Activated CD8-positive, alpha-beta T cell treated with anti-CD3 and anti-CD28 coated beads, Interleukin-2, amount 10 ng/mL, durations not matched to agents 7 days and 5 days (primary cell): ENCODE measurements at regions of chr4 and their contacts with region 1.

Region 1: DNA sequence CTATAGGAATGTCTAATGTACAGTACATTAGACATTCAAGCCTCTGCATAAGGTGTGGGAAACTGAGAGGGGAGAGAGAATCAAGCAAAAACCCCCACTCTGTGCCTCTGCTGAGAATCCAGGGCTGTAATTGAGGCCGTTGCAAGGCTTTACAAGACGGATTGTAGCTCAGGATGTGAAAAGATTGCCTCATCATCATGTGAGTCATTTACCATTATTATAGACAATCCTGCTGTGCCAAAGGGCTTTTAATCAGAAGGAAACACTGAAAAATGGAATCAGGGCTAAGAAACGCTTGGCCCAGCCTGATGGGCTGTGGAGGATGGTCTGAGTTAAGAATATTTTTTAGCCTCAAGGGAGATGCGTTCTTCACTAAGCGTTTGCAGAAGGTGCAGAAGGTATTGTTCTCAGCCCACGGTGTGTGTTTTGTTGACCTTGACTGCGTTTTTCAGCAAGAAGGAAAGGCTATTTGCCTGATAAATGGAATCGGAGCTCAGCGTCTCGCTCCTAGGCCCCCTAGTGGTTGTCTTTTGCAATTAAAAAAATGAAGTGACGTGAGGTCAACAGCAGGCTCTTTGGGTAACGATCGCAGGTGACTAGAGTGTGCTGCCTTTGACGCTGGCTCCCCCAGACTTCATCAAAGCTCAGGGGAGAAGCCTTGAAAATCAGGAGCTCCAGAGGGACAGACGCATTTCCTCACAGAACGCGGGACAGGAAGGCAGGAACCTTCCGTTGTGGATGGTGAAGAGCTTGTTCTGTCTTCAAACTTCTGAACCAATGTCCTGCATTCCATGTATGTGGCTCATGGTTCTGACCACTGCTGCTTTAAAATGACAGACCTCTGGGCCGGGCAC is 18.1 kb upstream of the CHRNA9 start:
- DNase-seq: peak; percentile 81
- ATAC-seq: peak; percentile 67
- H3K4me3 Mint-ChIP-seq: peak overlapping the region; percentile 80
- H3K27ac Mint-ChIP-seq: peak overlapping the region; percentile 94
- H3K4me1 Mint-ChIP-seq: peaks cover 56% of the 10 kb centered on the region
- H3K27me3 Mint-ChIP-seq: no peaks in the 10 kb centered on the region

Region 2: DNA sequence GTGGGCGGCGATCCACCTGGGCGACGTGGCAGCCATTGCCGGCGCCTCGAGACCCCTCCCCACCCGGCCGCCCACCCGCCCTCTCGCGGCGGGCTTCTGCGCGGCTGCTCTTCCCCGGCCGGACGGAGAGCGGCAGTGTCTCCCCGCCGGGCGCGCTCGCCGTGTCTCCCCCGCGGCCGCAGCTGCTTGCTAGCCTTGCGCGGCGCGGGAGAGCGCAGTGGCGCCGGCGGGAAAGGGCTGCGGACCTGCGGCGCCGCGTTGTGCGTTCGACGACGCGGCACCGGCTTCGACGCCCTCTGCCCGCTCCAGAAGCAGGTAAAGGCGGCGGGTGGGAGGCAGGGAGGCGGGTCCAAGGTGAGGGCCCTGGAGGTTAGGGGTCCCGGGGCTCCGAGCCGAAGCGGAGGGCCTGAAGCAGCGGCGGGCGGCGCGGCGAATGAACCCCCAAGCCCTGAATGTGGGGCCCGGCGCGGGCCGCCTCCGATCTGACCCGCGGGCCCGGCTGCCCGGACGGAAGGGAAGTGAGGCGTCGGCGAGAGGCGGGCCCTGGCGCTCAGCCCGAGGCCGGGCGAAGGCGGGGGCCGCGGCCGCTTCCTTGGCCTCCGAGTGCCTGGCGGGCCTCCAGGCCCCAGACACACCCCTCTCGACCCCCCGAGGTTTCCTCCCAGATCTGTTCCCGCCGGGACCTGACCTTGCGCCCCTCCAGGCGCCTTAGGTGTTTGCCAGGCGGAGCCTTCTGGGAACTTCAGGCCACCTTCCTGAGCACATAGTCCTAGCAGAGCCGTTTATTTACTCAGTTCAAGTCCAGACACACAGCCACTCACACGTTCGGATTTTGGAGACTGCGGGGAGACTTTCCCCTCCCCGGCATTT is 260.1 kb before region 1 on chr4 and contains the start of gene N4BP2:
- CTCF ChIA-PET with region 1: interaction called, 26 read pairs
- POLR2A ChIA-PET with region 1: interaction called, 11 read pairs
- DNase-seq: peak; percentile 80
- ATAC-seq: peak; percentile 49
- H3K4me3 Mint-ChIP-seq: peak within 1 kb of the TSS; percentile 93
- H3K27ac Mint-ChIP-seq: peak within 1 kb of the TSS; percentile 96
- H3K4me1 Mint-ChIP-seq: peaks cover 37% of the 10 kb centered on the region
- H3K27me3 Mint-ChIP-seq: peaks cover 8% of the 10 kb centered on the region
- total RNA-seq, gene N4BP2: 25.1 to 29.0 TPM

Region 3: DNA sequence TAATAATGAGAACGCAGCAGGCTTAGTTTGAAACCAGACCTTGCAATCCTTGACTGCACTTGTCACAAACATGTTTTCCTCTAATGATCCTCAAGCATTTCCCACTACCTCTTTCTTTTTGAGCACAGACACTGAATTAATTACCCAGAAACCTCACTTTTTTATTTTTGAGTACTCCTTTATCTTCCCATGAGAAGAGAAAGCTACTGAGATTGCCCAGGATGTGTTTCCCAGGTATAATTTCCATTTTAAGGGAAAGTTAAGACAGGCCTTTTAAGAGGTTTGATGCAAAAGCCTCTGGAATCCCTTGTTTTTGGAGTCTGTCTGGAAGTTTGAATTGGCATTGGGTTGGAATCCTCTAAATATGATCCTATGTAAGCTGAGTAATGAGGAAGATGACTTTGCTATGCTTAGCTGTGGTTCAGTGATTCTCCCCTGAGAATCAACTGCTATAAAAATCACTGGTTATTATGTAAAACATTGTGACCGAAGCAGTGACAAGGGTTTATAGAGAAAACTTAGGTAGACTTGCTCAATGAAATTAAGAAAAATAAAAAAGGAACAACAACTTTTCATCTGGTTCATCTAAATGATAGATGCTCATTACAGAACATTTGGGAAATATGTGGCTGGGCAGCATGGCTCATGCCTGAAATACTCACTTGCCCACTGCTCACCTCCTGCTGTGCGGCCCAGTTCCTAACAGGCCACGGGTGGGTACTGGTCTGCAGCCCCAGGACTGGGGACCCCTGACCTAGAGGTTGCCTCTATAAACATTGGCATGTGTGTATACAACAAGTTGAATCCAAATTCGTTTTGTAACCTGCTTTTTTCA is 131.0 kb before region 1 on chr4:
- CTCF ChIA-PET with region 1: interaction called, 149 read pairs
- POLR2A ChIA-PET with region 1: no interaction called
- DNase-seq: no peak
- ATAC-seq: no peak
- H3K4me3 Mint-ChIP-seq: no peak overlapping the region
- H3K27ac Mint-ChIP-seq: no peak overlapping the region
- H3K4me1 Mint-ChIP-seq: peaks cover 63% of the 10 kb centered on the region
- H3K27me3 Mint-ChIP-seq: no peaks in the 10 kb centered on the region

Region 4: GRCh38 chr4:40199999-40200874 is 116.8 kb before region 1 on chr4:
- CTCF ChIA-PET with region 1: interaction called, 149 read pairs
- POLR2A ChIA-PET with region 1: interaction called, 155 read pairs
- DNase-seq: peak; percentile 90
- ATAC-seq: peak; percentile 45
- H3K4me3 Mint-ChIP-seq: peak overlapping the region; percentile 93
- H3K27ac Mint-ChIP-seq: peak overlapping the region; percentile 96
- H3K4me1 Mint-ChIP-seq: peaks cover 37% of the 10 kb centered on the region
- H3K27me3 Mint-ChIP-seq: no peaks in the 10 kb centered on the region

Region 5: GRCh38 chr4:40212674-40213527 is 104.1 kb before region 1 on chr4:
- CTCF ChIA-PET with region 1: interaction called, 70 read pairs
- POLR2A ChIA-PET with region 1: interaction called, 5 read pairs
- DNase-seq: peak; percentile 33
- ATAC-seq: peak; percentile 25
- H3K4me3 Mint-ChIP-seq: peak overlapping the region; percentile 68
- H3K27ac Mint-ChIP-seq: peak overlapping the region; percentile 86
- H3K4me1 Mint-ChIP-seq: peaks cover 90% of the 10 kb centered on the region
- H3K27me3 Mint-ChIP-seq: no peaks in the 10 kb centered on the region

Region 6: DNA sequence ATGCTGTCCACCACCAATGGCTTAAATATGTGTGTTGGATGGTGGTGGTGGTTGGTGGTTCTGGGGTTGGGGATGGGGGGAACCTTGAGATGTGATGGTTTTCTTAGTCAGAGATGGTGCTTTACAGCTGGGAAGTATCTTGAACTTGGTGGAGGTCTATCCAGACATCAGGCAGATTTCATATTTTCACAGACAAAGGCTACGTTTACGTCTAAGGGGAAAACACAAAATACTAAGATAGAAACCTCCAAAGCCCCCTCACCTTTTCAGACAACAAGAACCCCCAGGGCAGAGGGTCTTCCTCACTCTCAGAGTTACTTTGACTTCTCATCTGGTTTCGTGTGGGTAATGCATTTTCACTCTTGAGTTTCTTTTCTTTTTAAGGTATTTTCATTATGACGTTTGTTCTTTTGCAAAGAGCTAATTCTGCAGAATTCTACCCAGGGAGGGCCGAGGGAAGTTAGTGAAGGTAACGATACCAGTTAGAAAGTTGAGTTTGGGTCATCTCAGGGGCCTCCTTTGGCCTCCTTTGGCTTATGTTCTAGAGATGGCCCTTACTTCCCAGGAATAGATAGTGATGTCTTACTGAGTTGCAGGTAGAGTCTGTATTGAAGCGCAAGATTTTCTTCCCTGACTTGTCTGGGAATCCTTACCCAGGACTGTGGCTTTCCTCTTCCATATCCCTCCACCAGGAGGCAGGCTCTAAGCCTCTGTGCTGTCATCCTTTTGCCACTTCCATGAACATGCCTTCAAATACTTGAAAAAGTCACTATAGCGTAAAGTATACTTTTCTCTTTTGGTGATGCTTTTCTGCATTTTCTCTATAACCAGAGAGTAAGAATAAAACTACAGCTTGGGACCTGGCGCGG is 88.3 kb before region 1 on chr4:
- CTCF ChIA-PET with region 1: interaction called, 145 read pairs
- POLR2A ChIA-PET with region 1: interaction called, 5 read pairs
- DNase-seq: peak; percentile 56
- ATAC-seq: no peak
- H3K4me3 Mint-ChIP-seq: peak overlapping the region; percentile 64
- H3K27ac Mint-ChIP-seq: peak overlapping the region; percentile 84
- H3K4me1 Mint-ChIP-seq: peaks cover 95% of the 10 kb centered on the region
- H3K27me3 Mint-ChIP-seq: no peaks in the 10 kb centered on the region

Region 7: DNA sequence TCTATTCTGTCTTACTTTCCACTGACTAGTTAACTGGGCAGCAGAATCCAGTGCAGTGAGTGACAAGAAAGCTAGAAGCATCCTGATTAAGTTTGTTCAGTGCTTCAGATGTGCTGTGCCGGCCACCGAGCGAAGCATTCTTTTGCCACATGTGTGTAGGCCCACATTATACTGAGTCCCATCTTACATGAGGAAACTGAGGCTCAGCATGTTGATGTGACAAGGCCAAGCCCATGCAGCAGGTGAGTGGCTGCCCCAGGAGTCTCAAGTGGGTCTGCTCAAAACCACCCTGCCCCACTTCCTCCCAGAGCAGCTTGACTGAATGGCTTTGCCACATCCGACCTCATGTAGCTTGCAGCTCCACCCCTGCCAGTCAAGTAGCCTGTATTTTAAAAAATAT is 69.7 kb before region 1 on chr4:
- CTCF ChIA-PET with region 1: interaction called, 19 read pairs
- POLR2A ChIA-PET with region 1: interaction called, 3 read pairs
- DNase-seq: peak; percentile 85
- ATAC-seq: peak; percentile 68
- H3K4me3 Mint-ChIP-seq: peak overlapping the region; percentile 72
- H3K27ac Mint-ChIP-seq: peak overlapping the region; percentile 94
- H3K4me1 Mint-ChIP-seq: peaks cover 78% of the 10 kb centered on the region
- H3K27me3 Mint-ChIP-seq: no peaks in the 10 kb centered on the region

Region 8: GRCh38 chr4:40502934-40503333 is 185.9 kb after region 1 on chr4:
- CTCF ChIA-PET with region 1: no interaction called
- POLR2A ChIA-PET with region 1: no interaction called
- DNase-seq: no peak
- ATAC-seq: peak; percentile 64
- H3K4me3 Mint-ChIP-seq: no peak overlapping the region
- H3K27ac Mint-ChIP-seq: peak overlapping the region; percentile 85
- H3K4me1 Mint-ChIP-seq: peaks cover 22% of the 10 kb centered on the region
- H3K27me3 Mint-ChIP-seq: no peaks in the 10 kb centered on the region